ENCODE measurements at regions of chr17 and their contacts with region 1.

Region 1: DNA sequence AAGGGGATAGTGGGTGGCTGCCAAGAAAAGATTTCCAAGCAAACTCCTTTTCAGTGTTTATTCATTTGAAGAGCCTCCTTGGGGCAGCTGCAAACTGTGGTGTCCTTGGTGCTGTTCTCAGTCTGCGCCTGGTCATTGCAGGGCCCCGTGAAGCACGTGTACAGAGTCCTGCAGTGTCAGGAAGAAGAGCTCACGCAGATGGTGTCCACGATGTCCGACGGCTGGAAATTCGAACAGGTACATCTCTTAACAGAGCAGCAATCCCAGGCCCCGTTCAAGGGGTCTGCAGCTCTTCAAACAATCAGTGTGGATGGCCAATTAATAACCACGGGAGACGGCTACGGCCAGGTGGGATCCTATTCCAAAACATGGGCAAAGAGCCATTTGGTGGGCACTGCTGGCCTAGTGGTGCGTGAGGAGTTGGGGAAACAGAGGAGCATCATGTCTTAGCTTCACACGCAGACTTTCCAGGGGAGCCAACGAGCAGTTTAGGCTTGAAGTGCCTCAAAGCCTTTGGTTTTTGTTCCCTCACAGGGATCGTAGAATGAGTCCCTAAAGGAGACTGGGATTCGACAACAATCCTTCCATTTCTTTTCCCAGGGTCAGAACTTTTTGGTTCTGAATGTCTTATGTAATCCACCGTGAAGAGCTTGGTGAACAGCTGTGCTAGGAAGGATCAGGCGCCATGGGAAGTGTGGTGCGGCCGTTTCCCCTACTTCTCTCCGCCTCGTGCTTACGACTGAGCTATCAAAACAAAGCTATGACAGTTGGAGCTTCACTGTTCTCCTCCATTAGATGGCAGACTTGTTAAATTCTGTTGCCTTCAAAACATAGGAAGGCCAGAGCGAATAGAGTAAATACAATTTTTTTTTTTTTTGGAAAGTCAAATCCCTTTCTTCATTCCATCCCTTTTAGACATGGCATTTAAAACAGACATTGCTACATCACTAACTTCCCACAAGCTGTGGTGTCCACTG is 12.6 kb downstream of the KCTD2 start:
- DNase-seq: no peak
- H3K4me3 ChIP-seq: no peak overlapping the region
- CTCF ChIP-seq: no peak
- POLR2A ChIP-seq: no peak

Region 2: GRCh38 chr17:75173526-75173925 is 113.9 kb after region 1 on chr17:
- intact Hi-C with region 1: loop called (anchors 10 kb)
- DNase-seq: no peak
- H3K4me3 ChIP-seq: no peak overlapping the region
- CTCF ChIP-seq: no peak
- POLR2A ChIP-seq: no peak

Measured in lower leg skin (tissue), 4 donors.